ENCODE measurements at regions of chr4 and their contacts with region 1.

Region 1: DNA sequence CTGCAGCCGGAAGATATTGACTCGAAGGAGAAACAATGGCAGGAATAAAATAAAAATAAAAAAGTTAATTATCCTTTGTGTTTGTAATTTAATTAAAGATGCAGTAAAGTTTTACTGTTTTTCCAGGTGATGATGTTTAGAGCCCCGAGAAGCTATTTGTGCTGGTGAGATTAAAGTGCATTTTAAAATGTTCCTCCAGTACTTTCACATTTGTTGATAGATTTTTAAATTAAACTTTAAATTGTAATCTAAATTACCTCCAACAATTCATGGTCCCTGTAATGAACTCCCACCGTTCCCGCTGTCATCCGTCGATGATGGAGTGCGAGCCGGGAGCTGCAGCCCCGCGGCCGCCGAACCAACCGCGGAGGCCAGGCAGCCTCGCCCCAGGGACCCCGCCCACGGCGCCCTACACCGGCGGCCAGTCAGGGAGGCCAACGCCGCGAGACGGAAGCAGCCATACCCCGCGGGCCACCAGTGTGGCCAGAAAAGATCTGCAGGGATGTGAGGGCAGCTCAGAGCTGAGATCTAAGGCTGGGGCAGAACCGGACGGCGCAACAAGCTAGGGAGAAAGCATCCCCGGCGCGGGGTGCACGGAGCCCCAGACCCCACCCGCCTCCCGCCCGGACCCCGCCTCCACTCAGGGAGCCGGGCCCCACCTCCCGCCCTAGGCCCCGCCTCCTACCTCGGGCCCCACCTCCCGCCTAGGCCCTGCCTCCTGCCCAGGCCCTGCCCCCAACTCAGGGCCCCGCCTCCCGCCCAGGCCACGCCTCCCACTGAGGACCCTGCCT is 104.0 kb downstream of the FAM53A start:
- DNase-seq: peak; percentile 98
- ATAC-seq: peak; percentile 79
- H3K4me3 Mint-ChIP-seq: peak overlapping the region; percentile 60
- H3K27ac Mint-ChIP-seq: no peak overlapping the region
- H3K4me1 Mint-ChIP-seq: peaks cover 4% of the 10 kb centered on the region
- H3K27me3 Mint-ChIP-seq: no peaks in the 10 kb centered on the region

Region 2: GRCh38 chr4:705278-706082 is 874.6 kb before region 1 on chr4 and contains the start of gene PCGF3:
- CTCF ChIA-PET with region 1: no interaction called
- POLR2A ChIA-PET with region 1: no interaction called
- intact Hi-C with region 1: loop called in 1 of 2 experiments (anchors 10 kb)
- DNase-seq: peak; percentile 99
- ATAC-seq: peak; percentile 99
- H3K4me3 Mint-ChIP-seq: peak within 1 kb of the TSS; percentile 68
- H3K27ac Mint-ChIP-seq: no peak within 1 kb of the TSS
- H3K4me1 Mint-ChIP-seq: peaks cover 15% of the 10 kb centered on the region
- H3K27me3 Mint-ChIP-seq: no peaks in the 10 kb centered on the region
- total RNA-seq, gene PCGF3: 20.6 to 22.5 TPM

Region 3: DNA sequence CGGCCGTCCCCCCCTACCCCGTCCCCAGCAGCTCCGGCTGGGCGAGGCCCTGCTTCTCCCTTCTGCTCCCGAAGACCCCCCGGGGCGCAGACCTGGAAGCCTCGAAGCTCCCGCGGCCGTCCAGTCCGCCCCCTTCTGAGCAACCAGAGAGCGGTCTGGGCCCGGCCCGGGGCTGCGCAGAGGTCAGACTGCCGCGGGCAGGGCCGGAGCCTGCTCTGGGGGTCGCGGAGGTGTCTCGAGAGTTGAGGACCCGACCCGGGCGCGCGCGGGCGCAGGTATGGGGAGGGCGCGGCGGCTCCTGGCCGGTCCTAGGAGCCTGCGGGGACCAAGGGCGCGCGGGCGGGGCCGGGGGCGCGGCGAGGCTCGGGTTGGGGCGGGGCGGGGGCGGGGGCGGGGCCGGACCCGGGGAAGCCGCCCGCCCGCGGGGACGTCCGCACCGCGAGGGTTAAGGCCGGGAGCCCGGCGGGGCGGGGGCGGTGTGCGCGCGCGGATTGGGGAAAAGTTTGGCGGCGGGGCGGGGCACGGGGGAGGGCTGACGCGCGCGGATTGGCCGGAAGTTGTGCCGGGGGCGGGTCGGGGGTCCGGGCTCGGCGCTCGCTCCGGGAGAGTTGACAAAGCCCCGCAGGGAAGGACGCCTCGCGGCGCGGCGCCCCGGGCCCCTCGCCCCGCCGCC is 568.9 kb before region 1 on chr4 and contains the start of gene FGFRL1:
- CTCF ChIA-PET with region 1: no interaction called
- POLR2A ChIA-PET with region 1: no interaction called
- intact Hi-C with region 1: loop called in 1 of 2 experiments (anchors 1 kb)
- DNase-seq: peak; percentile 97
- ATAC-seq: peak; percentile 59
- H3K4me3 Mint-ChIP-seq: peak within 1 kb of the TSS; percentile 75
- H3K27ac Mint-ChIP-seq: peak within 1 kb of the TSS; percentile 80
- H3K4me1 Mint-ChIP-seq: peaks cover 9% of the 10 kb centered on the region
- H3K27me3 Mint-ChIP-seq: peaks cover 26% of the 10 kb centered on the region
- total RNA-seq, gene FGFRL1: 17.6 to 23.5 TPM

Region 4: GRCh38 chr4:1566838-1567513 is 13.1 kb before region 1 on chr4:
- CTCF ChIA-PET with region 1: no interaction called
- POLR2A ChIA-PET with region 1: no interaction called
- intact Hi-C with region 1: loop called in 1 of 2 experiments (anchors 1 kb)
- DNase-seq: no peak
- ATAC-seq: no peak
- H3K4me3 Mint-ChIP-seq: no peak overlapping the region
- H3K27ac Mint-ChIP-seq: no peak overlapping the region
- H3K4me1 Mint-ChIP-seq: peaks cover 3% of the 10 kb centered on the region
- H3K27me3 Mint-ChIP-seq: no peaks in the 10 kb centered on the region

Region 5: DNA sequence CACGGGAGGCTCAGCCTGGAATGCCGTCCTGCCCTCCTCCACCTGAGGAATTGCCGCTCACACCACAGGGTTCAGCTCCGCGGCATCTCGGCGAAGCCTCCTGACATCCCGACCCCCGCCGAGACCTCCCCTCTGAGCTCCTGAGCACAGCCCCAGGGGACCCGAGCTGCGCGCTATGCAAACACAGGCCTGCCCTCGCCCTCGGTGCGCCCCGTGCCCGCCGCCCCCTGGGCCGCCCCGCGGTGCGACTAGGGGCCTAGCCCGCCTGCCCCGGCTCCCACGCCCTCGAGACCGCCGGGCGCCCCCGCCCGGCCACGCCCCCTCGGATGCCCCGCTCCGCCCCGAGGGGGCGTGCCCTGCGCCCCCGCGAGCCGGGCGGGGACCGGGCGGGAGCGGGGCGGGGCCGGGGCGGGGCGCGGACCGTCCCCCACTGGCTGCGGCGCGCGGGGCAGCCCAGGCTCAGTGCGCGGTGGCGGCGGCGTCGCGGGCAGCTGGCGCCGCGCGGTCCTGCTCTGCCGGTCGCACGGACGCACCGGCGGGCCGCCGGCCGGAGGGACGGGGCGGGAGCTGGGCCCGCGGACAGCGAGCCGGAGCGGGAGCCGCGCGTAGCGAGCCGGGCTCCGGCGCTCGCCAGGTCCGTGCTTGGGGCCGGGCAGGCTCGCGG is 212.9 kb after region 1 on chr4 and contains the start of gene FGFR3:
- CTCF ChIA-PET with region 1: no interaction called
- POLR2A ChIA-PET with region 1: no interaction called
- intact Hi-C with region 1: loop called in 1 of 2 experiments (anchors 1 kb)
- DNase-seq: peak; percentile 55
- ATAC-seq: peak; percentile 82
- H3K4me3 Mint-ChIP-seq: no peak within 1 kb of the TSS
- H3K27ac Mint-ChIP-seq: no peak within 1 kb of the TSS
- H3K4me1 Mint-ChIP-seq: no peaks in the 10 kb centered on the region
- H3K27me3 Mint-ChIP-seq: peaks cover 10% of the 10 kb centered on the region
- total RNA-seq, gene FGFR3: 0.11 TPM in 1 of 2 experiments, not detected in the other

Region 6: DNA sequence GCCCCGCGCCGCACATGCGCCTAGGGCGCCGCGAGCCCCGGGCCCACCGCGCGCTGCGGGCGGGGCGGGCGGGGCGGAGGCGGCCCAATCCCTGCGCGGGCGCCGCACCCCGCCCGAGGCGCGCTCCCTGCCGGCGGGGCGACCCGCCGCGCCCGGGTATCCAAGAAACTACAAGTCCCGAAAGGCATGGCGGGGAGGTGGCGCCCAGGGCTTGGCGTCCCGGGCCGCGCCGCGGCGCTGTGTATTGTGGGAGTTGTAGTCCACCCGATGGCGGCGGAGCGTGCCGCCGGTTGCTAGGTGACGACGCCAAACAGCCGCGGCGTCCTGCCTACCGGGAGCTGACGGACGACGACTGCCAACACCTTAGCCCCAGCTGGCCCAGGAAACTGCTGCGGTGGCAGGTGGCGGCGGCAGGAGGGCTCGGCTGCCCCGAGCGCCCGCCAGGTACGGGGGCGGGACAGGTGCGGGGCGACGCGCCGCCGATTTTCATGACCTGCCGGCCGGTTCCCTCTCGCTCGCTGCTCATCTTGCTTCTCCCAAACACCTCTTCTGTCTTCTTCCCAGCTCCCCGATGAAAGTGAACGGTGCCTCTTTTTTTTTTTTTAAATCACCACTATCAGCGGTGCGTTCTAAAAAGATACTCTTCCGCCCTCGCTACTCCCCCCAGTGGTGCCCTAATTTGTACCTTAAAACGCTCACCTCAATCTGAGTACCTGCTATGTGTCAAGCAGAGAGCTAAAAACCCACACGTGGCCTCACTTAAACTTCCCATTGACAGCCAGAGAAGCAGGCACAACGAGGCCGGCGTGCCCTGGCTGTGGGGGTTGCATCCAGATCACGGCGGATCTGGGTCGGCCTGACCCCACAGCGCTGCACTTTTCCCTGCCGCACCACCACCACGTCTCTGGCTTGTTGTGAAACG is 838.8 kb after region 1 on chr4 and contains the start of gene CFAP99:
- CTCF ChIA-PET with region 1: no interaction called
- POLR2A ChIA-PET with region 1: no interaction called
- intact Hi-C with region 1: loop called in 1 of 2 experiments (anchors 2 kb)
- DNase-seq: peak; percentile 99
- ATAC-seq: peak; percentile 93
- H3K4me3 Mint-ChIP-seq: peak within 1 kb of the TSS; percentile 82
- H3K27ac Mint-ChIP-seq: peak within 1 kb of the TSS; percentile 68
- H3K4me1 Mint-ChIP-seq: peaks cover 39% of the 10 kb centered on the region
- H3K27me3 Mint-ChIP-seq: peaks cover 27% of the 10 kb centered on the region
- total RNA-seq, gene CFAP99: 0.05 TPM in 1 of 2 experiments, not detected in the other